Activated CD8-positive, alpha-beta T cell treated with anti-CD3 and anti-CD28 coated beads, Interleukin-2, amount 10 ng/mL, durations not matched to agents 7 days and 5 days (primary cell): ENCODE measurements at regions of chr2 and their contacts with region 1.

Region 1: GRCh38 chr2:239267288-239267951 is 133.4 kb downstream of the HDAC4 start:
- DNase-seq: peak; percentile 97
- ATAC-seq: peak; percentile 84
- H3K4me3 Mint-ChIP-seq: peak overlapping the region; percentile 86
- H3K27ac Mint-ChIP-seq: peak overlapping the region; percentile 93
- H3K4me1 Mint-ChIP-seq: peaks cover 86% of the 10 kb centered on the region
- H3K27me3 Mint-ChIP-seq: no peaks in the 10 kb centered on the region

Region 2: DNA sequence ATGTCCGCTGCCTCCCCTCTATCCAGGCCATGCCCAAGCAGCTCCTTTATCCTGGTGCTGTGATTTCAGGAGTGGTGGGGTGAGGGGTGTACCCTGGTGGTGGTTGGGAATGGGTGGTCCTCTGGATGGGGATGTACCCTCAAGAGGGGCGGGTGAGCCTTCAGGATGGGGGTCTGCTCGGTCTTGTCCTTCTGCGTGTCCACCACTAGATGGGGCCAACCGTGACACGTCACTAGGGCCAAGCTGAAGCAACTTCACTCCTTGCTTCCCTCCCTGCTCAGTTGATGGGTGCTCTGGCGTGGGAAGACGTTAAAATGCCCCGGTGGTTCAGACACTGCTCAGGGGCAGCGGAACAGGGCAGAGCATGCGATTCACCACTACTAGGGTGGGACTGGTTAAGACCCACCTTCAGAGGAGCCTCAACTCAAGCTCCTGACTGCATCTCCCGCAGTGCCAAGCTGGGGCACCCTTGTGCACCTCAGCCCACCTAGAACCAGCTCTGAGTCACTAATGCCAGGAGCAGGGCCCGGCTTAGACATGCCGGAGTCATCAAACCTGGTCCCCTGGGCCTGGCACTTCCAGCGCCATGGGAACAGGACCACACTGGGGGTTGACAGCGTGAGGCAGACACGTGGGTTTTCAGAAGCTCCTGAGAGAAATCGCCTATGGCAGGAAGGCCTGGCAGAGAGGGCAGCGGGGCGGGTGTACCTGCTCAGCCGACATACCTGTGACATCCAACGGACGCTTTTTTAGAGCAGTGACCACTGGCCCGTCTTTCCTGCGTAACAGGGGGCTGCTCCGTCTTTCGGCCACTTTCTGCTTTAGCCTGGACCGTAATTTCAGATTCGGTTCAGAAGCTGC is 123.3 kb before region 1 on chr2:
- CTCF ChIA-PET with region 1: interaction called, 10 read pairs
- POLR2A ChIA-PET with region 1: no interaction called
- DNase-seq: peak; percentile 43
- ATAC-seq: peak; percentile 49
- H3K4me3 Mint-ChIP-seq: no peak overlapping the region
- H3K27ac Mint-ChIP-seq: no peak overlapping the region
- H3K4me1 Mint-ChIP-seq: peaks cover 3% of the 10 kb centered on the region
- H3K27me3 Mint-ChIP-seq: no peaks in the 10 kb centered on the region

Region 3: GRCh38 chr2:239181907-239182581 is 85.4 kb before region 1 on chr2:
- CTCF ChIA-PET with region 1: no interaction called
- POLR2A ChIA-PET with region 1: no interaction called
- DNase-seq: no peak
- ATAC-seq: no peak
- H3K4me3 Mint-ChIP-seq: no peak overlapping the region
- H3K27ac Mint-ChIP-seq: no peak overlapping the region
- H3K4me1 Mint-ChIP-seq: no peaks in the 10 kb centered on the region
- H3K27me3 Mint-ChIP-seq: no peaks in the 10 kb centered on the region

Region 4: DNA sequence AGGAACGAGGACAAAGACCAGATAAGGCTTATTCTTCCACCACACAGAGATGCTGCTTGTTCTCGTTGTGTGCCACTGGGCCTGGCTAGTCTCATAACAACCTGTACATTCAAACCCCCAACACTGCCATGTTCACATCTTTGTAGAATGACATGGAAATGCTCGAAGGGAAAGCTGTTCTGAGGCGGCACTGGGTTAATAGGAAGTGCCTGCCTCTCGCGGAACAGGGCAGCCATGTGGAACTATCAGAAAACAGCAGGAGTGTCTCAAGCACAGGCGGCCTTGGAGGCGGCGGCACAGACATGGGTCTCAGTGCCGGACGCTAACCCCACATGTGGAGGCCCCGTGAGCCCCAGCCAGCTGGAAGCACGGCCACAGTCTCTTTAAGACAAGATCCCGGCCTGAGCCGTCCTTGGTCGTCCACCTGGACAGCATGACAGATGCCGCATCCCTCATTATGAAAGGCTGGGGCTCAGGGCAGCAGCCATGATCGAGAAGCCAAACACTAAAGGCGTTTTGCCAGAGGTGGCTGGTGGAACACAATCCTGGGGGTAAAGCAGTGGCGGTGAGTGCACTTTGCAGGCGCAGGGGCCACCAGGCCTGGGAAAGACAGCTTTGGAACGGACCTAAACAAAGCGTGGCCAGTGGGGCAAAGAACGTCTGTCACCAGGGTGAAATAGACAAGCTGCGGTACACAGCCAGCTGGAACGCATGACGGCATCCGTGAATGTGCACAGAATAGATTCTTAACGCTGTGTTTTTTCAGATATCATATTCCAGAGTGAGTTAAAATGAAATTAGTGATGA is 27.6 kb before region 1 on chr2:
- CTCF ChIA-PET with region 1: no interaction called
- POLR2A ChIA-PET with region 1: no interaction called
- DNase-seq: no peak
- ATAC-seq: no peak
- H3K4me3 Mint-ChIP-seq: no peak overlapping the region
- H3K27ac Mint-ChIP-seq: no peak overlapping the region
- H3K4me1 Mint-ChIP-seq: peaks cover 13% of the 10 kb centered on the region
- H3K27me3 Mint-ChIP-seq: no peaks in the 10 kb centered on the region

Region 5: GRCh38 chr2:239288951-239289511 is 21.6 kb after region 1 on chr2:
- CTCF ChIA-PET with region 1: interaction called, 37 read pairs
- POLR2A ChIA-PET with region 1: interaction called, 14 read pairs
- DNase-seq: peak; percentile 69
- ATAC-seq: peak; percentile 73
- H3K4me3 Mint-ChIP-seq: peak overlapping the region; percentile 77
- H3K27ac Mint-ChIP-seq: peak overlapping the region; percentile 93
- H3K4me1 Mint-ChIP-seq: peaks cover 76% of the 10 kb centered on the region
- H3K27me3 Mint-ChIP-seq: no peaks in the 10 kb centered on the region

Region 6: DNA sequence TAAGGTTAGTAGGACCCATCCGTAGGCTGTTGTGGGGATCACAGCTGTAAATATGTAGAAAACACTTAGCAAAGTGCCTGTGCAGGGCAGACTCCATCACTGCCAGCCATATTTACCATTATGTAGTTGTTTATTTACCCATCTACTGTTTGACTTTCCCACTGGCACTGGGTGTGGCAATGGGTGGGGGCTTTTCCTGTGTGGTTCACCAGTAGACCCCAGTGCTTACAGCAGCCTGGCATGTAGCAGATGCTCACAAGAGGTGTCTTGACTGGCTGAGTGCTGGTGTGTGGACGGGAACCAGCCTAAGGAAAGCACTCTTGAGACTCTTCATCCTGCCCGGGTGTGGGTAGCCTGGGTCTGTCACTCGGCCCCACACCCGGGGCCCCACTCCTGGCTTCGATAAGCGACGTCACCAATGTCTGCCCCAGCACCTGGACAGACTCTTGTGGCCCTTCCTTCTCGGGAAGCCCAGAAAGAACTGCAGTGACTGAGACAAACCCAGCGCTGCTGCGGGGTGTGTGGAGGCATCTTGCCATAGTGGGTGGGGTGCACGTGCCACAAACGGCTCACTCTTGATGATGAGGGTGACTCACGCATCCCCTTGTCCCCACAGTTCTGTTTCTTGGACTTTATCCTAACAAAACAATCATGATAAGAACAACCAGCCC is 55.1 kb after region 1 on chr2:
- CTCF ChIA-PET with region 1: interaction called, 9 read pairs
- POLR2A ChIA-PET with region 1: interaction called, 17 read pairs
- DNase-seq: peak; percentile 42
- ATAC-seq: peak; percentile 9
- H3K4me3 Mint-ChIP-seq: peak overlapping the region; percentile 27
- H3K27ac Mint-ChIP-seq: peak overlapping the region; percentile 98
- H3K4me1 Mint-ChIP-seq: peaks cover 82% of the 10 kb centered on the region
- H3K27me3 Mint-ChIP-seq: no peaks in the 10 kb centered on the region

Region 7: GRCh38 chr2:239401067-239401880 is 133.9 kb after region 1 on chr2:
- CTCF ChIA-PET with region 1: interaction called, 54 read pairs
- POLR2A ChIA-PET with region 1: interaction called, 11 read pairs
- DNase-seq: peak; percentile 99
- ATAC-seq: peak; percentile 93
- H3K4me3 Mint-ChIP-seq: peak overlapping the region; percentile 91
- H3K27ac Mint-ChIP-seq: peak overlapping the region; percentile 96
- H3K4me1 Mint-ChIP-seq: peaks cover 40% of the 10 kb centered on the region
- H3K27me3 Mint-ChIP-seq: peaks cover 11% of the 10 kb centered on the region